Activated T-helper 1 cell treated with anti-CD3 and anti-CD28 coated beads, Interleukin-12 subunit alpha, Interleukin-12 subunit beta, Interleukin-2, Interleukin-4 antibody, amounts not matched to agents 30 ng/mL and 10 ng/mL and 1 ng/mL, durations not matched to agents 14 hours and 24 hours and 36 hours (primary cell): ENCODE measurements at regions of chr12 and their contacts with region 1.

Region 1: GRCh38 chr12:30847259-30847658 is 79.3 kb upstream of the TSPAN11 start:
- DNase-seq: peak; percentile 24
- H3K4me3 Mint-ChIP-seq: no peak overlapping the region
- H3K27ac Mint-ChIP-seq: no peak overlapping the region
- H3K4me1 Mint-ChIP-seq: peaks cover 11% of the 10 kb centered on the region
- H3K27me3 Mint-ChIP-seq: peaks cover 8% of the 10 kb centered on the region

Region 2: DNA sequence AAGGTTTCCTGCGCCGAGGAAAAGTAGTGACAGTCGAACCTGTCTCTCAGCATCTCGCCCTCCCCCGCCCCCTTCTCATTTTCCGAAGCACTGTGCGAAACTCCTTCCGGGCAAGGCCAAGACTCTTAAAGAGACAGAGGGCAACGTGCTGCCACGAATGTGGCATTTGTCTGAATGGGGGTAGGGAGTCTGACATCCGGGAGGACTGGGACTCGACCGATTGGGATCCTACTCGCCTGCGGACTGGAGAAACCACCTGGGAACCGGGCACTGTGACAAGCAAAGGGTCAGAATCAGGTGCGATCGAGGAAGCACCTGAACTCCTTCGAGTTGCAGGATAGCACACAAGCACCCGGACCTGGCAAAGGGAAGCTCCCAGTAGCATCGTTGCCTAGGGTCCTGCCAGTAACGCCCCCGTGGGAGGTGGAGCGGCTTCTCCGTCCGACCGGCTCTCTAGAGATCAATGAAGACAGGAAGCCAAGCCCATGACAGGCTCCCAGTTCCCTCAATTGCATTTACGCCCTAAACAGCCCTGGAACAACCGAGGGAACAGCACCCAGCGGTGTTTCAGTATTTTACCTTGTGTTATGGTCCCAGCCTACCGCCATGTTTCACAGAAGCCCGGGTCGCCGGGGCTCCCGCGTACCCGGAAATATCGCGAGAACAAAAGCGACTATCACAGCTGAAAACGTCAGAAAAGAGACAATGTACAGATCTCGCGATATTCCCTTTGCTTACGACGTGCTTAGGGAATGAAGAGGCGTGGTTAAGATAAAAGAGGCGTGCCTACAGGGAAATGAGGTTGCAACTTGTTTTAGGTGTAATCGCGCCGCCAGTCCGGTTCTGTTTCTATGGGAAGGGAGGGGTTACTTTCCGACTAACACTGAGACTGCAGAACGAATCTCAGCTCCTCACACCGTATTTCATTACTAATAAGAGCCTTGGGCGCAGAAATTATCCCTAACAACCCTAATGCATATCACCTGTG is 1466.4 kb before region 1 on chr12 and contains the start of gene ERGIC2:
- intact Hi-C with region 1: loop called (anchors 1 kb)
- DNase-seq: peak; percentile 90
- H3K4me3 Mint-ChIP-seq: peak within 1 kb of the TSS; percentile 97
- H3K27ac Mint-ChIP-seq: peak within 1 kb of the TSS; percentile 94
- H3K4me1 Mint-ChIP-seq: peaks cover 31% of the 10 kb centered on the region
- H3K27me3 Mint-ChIP-seq: peaks cover 4% of the 10 kb centered on the region
- total RNA-seq, gene ERGIC2: 94.9 and 105 TPM in 2 replicates

Region 3: DNA sequence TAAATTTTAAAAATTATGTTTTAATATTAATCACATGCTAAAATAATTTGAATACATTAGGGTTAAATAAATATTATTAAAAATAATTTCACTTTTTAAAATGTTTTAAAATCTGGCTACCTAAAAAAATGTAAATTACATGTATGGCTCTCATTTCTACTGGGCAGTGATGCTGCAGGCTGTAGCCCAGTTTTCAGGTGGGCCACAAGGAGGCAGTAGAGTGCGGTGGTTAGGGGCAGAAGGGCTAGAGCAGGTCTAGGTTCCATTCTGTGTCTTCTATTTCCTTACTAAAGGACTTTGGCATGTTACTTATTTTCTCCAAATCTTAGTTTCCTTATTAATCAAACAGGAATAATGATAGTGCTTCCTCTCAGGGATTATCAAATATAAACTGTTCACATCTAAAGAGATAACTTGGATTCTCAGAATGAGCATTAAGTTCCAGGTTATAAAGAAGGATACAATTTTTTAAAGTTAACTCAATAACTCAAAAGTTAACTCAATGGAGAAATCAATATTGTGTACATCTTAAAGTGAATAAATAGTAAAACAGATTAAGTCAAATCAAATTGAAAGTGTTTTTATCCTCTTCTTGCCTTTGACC is 1294.8 kb before region 1 on chr12:
- intact Hi-C with region 1: loop called (anchors 1 kb)
- DNase-seq: peak; percentile 41
- H3K4me3 Mint-ChIP-seq: no peak overlapping the region
- H3K27ac Mint-ChIP-seq: no peak overlapping the region
- H3K4me1 Mint-ChIP-seq: no peaks in the 10 kb centered on the region
- H3K27me3 Mint-ChIP-seq: no peaks in the 10 kb centered on the region

Region 4: DNA sequence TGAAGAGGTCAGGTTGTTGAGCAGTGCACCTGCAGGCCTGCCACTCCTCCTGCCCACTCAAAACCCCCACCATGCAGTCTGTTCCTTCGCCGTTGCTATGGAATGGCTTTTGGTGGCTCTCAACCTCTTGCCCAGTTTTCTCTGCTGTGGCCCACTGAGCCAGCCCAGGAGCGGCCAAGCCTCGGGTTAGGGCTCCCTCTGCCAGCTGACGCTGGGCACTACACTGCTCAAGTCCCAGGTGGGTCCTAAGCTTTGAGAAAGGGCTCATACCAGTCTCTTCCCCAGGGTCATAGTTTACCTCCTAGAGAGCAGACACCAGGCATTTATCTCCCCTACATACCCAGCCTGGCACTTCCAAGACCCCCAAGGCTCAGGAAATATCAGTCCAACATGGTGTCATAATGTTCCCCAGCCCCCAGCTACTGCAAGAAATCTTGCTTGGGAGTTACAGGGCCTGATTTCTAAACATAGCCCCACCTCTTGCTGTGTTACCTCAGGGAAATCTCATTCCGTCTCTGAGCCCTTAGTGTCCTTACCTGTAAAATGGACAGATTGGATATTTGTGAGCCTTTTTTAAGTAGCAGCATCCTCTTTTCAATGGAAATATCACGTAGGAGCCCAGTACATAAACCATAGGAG is 138.7 kb after region 1 on chr12:
- intact Hi-C with region 1: loop called (anchors 1 kb)
- DNase-seq: no peak
- H3K4me3 Mint-ChIP-seq: no peak overlapping the region
- H3K27ac Mint-ChIP-seq: no peak overlapping the region
- H3K4me1 Mint-ChIP-seq: no peaks in the 10 kb centered on the region
- H3K27me3 Mint-ChIP-seq: no peaks in the 10 kb centered on the region

Region 5: DNA sequence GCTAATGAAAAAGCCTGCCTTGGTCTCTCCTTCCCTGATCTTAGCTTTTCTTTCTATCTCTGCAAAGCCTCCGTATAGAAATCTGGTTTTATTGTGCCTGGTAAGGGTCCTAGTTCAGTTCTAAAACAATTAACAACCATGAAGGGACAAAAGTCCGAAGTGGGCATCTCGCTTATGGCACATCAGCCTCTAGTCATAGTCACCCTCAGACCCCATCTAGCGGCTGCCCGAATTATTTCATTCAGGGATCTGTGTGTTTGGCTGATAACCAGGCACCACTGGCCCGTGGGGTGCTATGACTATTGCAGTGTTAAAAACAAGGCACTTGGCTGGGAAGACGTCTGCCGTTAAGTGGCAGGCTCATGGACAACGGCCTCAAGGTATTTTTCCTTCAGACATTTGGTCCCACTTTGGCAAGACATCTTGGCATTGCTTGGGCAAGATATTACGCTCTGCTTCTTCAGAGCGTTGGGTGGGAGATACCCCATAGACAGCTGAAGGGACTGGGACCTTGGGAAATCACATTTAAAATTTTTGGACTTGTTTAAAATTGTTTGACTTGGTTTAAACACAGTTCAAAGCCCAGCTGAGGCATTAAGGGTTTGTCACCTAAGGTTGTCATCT is 391.6 kb after region 1 on chr12:
- intact Hi-C with region 1: loop called (anchors 1 kb)
- DNase-seq: peak; percentile 25
- H3K4me3 Mint-ChIP-seq: no peak overlapping the region
- H3K27ac Mint-ChIP-seq: no peak overlapping the region
- H3K4me1 Mint-ChIP-seq: peaks cover 11% of the 10 kb centered on the region
- H3K27me3 Mint-ChIP-seq: peaks cover 14% of the 10 kb centered on the region

Region 6: GRCh38 chr12:31272607-31273225 is 425.5 kb after region 1 on chr12:
- intact Hi-C with region 1: loop called (anchors 1 kb)
- DNase-seq: no peak
- H3K4me3 Mint-ChIP-seq: no peak overlapping the region
- H3K27ac Mint-ChIP-seq: peak overlapping the region; percentile 31
- H3K4me1 Mint-ChIP-seq: peaks cover 6% of the 10 kb centered on the region
- H3K27me3 Mint-ChIP-seq: no peaks in the 10 kb centered on the region